CD4-positive, alpha-beta T cell (primary cell): ENCODE measurements at regions of chr4 and their contacts with region 1.

Region 1: GRCh38 chr4:70979445-70980008 is 13.9 kb upstream of the DCK start:
- DNase-seq: no peak
- ATAC-seq: no peak
- H3K4me3 ChIP-seq: no peak overlapping the region
- H3K4me3 Mint-ChIP-seq: no peak overlapping the region
- H3K27ac ChIP-seq: no peak overlapping the region
- H3K27ac Mint-ChIP-seq: no peak overlapping the region
- H3K4me1 ChIP-seq: no peaks in the 10 kb centered on the region
- H3K4me1 Mint-ChIP-seq: no peaks in the 10 kb centered on the region
- H3K27me3 ChIP-seq: no peaks in the 10 kb centered on the region
- H3K27me3 Mint-ChIP-seq: no peaks in the 10 kb centered on the region
- CTCF ChIP-seq: no peak

Region 2: GRCh38 chr4:70392057-70392776 is 587.3 kb before region 1 on chr4:
- CTCF ChIA-PET with region 1: no interaction called
- POLR2A ChIA-PET with region 1: no interaction called
- intact Hi-C with region 1: no loop called
- DNase-seq: no peak
- ATAC-seq: no peak
- H3K4me3 ChIP-seq: no peak overlapping the region
- H3K4me3 Mint-ChIP-seq: no peak overlapping the region
- H3K27ac ChIP-seq: no peak overlapping the region
- H3K27ac Mint-ChIP-seq: no peak overlapping the region
- H3K4me1 ChIP-seq: no peaks in the 10 kb centered on the region
- H3K4me1 Mint-ChIP-seq: no peaks in the 10 kb centered on the region
- H3K27me3 ChIP-seq: no peaks in the 10 kb centered on the region
- H3K27me3 Mint-ChIP-seq: no peaks in the 10 kb centered on the region
- CTCF ChIP-seq: no peak

Region 3: DNA sequence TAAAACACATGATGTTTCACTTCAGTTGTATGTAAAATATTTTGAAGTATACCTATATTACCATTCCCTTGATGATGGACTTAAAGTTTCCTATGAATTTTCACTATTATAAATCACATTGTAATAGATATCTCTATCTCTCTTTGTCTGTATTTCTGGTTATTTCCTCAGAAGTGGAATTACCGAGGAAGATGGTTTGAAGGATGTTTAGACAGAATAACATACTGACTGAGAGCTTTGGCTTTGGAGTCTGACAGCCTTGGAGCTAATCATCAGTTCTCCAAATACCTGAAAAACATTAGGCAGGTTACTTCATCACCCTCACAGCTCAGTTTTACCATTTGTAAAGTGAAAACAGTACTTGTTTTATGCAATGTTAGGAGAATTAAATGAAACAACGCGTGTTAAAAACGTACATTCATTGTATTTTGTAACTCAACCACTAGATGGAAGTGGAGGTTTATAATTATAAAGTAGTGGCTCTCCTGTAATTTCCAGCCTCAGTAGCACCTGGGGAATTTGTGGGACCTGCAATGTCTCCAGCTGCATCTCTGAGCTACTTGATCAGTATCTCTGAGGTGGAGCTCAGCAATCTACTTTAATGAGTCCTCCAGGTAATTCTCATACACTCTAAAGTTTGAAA is 327.5 kb before region 1 on chr4:
- CTCF ChIA-PET with region 1: no interaction called
- POLR2A ChIA-PET with region 1: no interaction called
- intact Hi-C with region 1: loop called in 1 of 2 experiments (anchors 10 kb)
- DNase-seq: peak in 4 of 14 experiments; percentile 4 to 56 (median 54)
- ATAC-seq: peak; percentile 56
- H3K4me3 ChIP-seq: no peak overlapping the region
- H3K4me3 Mint-ChIP-seq: no peak overlapping the region
- H3K27ac ChIP-seq: no peak overlapping the region
- H3K27ac Mint-ChIP-seq: no peak overlapping the region
- H3K4me1 ChIP-seq: no peaks in the 10 kb centered on the region
- H3K4me1 Mint-ChIP-seq: peaks cover 4% of the 10 kb centered on the region
- H3K27me3 ChIP-seq: no peaks in the 10 kb centered on the region
- H3K27me3 Mint-ChIP-seq: peaks cover 11% of the 10 kb centered on the region
- CTCF ChIP-seq: peak; percentile 71

Region 4: GRCh38 chr4:70687821-70688794 is 291.4 kb before region 1 on chr4 and contains the start of gene UTP3:
- CTCF ChIA-PET with region 1: no interaction called
- POLR2A ChIA-PET with region 1: no interaction called
- intact Hi-C with region 1: no loop called
- DNase-seq: peak; percentile 87 to 98 (median 90)
- ATAC-seq: peak; percentile 87
- H3K4me3 ChIP-seq: peak within 1 kb of the TSS; percentile 74
- H3K4me3 Mint-ChIP-seq: peak within 1 kb of the TSS; percentile 91
- H3K27ac ChIP-seq: peak within 1 kb of the TSS; percentile 94 to 97
- H3K27ac Mint-ChIP-seq: peak within 1 kb of the TSS; percentile 99
- H3K4me1 ChIP-seq: peaks cover 26% of the 10 kb centered on the region
- H3K4me1 Mint-ChIP-seq: peaks cover 45% of the 10 kb centered on the region
- H3K27me3 ChIP-seq: no peaks in the 10 kb centered on the region
- H3K27me3 Mint-ChIP-seq: no peaks in the 10 kb centered on the region
- CTCF ChIP-seq: peak; percentile 98
- total RNA-seq, gene UTP3: 19.2 to 20.5 TPM

Region 5: GRCh38 chr4:71184195-71184781 is 204.8 kb after region 1 on chr4:
- CTCF ChIA-PET with region 1: no interaction called
- POLR2A ChIA-PET with region 1: no interaction called
- intact Hi-C with region 1: loop called in 1 of 2 experiments (anchors 10 kb)
- DNase-seq: peak in 8 of 14 experiments; percentile 1 to 72 (median 30)
- ATAC-seq: peak; percentile 36
- H3K4me3 ChIP-seq: no peak overlapping the region
- H3K4me3 Mint-ChIP-seq: peak overlapping the region; percentile 18
- H3K27ac ChIP-seq: no peak overlapping the region
- H3K27ac Mint-ChIP-seq: no peak overlapping the region
- H3K4me1 ChIP-seq: peaks cover 15% of the 10 kb centered on the region
- H3K4me1 Mint-ChIP-seq: peaks cover 32% of the 10 kb centered on the region
- H3K27me3 ChIP-seq: peaks cover 11 to 36% of the 10 kb centered on the region in 2 experiments
- H3K27me3 Mint-ChIP-seq: peaks cover 43% of the 10 kb centered on the region
- CTCF ChIP-seq: peak; percentile 69